ENCODE measurements at regions of chr15 and their contacts with region 1.

Region 1: GRCh38 chr15:75801859-75802593 is 41.2 kb upstream of the UBE2Q2 start:
- DNase-seq: no peak
- H3K4me3 ChIP-seq: peak overlapping the region; percentile 50
- CTCF ChIP-seq: peak; percentile 87

Region 2: GRCh38 chr15:75508840-75509532 is 293.0 kb before region 1 on chr15:
- CTCF ChIA-PET with region 1: interaction called, 18 read pairs
- POLR2A ChIA-PET with region 1: no interaction called
- DNase-seq: no peak
- H3K4me3 ChIP-seq: no peak overlapping the region
- CTCF ChIP-seq: peak; percentile 54

Region 3: DNA sequence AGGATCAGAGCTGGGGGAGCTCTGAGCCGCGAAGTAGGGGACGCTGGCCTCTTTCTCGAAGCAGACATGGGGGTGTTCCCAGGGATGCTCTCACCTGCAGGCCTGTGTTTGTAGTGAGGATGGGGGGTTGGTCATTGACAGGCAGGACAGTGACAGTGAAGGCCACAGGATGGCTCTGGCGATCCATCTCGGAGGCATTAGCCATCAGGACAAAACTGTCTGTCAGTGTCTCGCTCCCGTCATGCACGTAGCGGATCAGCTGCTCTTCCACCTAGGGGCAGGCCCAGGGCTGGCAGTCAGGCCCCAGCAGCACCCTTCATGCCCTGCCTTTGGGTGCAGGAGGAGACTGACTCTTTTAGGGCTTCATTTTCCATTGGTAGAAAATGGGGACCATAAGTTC is 117.4 kb before region 1 on chr15:
- CTCF ChIA-PET with region 1: interaction called, 116 read pairs
- POLR2A ChIA-PET with region 1: interaction called, 5 read pairs
- DNase-seq: no peak
- H3K4me3 ChIP-seq: no peak overlapping the region
- CTCF ChIP-seq: no peak

Region 4: DNA sequence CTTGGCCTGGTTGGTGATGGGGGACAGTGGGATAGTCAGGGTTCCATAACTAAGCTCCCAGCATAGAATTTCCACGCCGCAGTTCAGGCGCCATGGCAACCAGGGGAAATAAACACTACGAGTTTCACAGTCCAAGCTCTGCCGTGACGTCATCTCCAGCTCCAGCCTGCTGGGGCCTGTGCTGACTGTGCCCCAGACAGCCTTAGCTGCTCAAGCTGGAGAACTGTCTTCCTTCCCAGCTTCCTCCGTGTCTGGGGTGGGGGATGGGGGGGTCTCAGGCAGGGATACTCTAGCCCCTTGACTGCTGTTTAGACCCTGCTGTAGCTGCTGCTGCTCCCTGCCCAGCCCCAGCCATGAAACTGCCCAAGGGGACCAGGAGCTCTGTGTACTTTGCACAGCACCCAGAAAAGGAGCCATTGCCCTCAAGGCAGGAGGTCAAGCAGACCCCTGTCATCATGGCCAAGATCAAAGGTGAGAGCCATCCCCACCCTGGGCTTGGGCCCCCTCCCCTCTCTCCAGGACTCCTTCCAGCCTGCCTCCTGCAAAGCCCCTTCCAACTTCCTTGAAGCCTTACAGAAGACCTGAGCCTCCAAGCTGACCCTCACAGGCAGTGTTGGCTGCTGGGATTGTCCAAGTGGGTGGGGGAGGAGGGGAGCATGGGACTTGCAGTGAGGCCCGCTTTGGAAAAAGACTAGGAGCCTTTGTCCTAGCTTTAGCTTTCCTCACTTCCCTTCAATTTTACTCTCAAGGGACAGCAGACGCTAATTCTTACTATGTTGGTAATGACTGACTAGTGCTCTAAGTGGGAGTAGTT is 78.0 kb before region 1 on chr15:
- CTCF ChIA-PET with region 1: interaction called, 59 read pairs
- POLR2A ChIA-PET with region 1: interaction called, 3 read pairs
- DNase-seq: peak; percentile 76
- H3K4me3 ChIP-seq: no peak overlapping the region
- CTCF ChIP-seq: no peak

Region 5: GRCh38 chr15:75776065-75776423 is 26.0 kb before region 1 on chr15:
- CTCF ChIA-PET with region 1: interaction called, 12 read pairs
- POLR2A ChIA-PET with region 1: no interaction called
- DNase-seq: peak; percentile 28
- H3K4me3 ChIP-seq: no peak overlapping the region
- CTCF ChIP-seq: no peak

Region 6: GRCh38 chr15:75821786-75822345 is 19.8 kb after region 1 on chr15:
- CTCF ChIA-PET with region 1: interaction called, 13 read pairs
- POLR2A ChIA-PET with region 1: no interaction called
- DNase-seq: no peak
- H3K4me3 ChIP-seq: no peak overlapping the region
- CTCF ChIP-seq: no peak

Region 7: DNA sequence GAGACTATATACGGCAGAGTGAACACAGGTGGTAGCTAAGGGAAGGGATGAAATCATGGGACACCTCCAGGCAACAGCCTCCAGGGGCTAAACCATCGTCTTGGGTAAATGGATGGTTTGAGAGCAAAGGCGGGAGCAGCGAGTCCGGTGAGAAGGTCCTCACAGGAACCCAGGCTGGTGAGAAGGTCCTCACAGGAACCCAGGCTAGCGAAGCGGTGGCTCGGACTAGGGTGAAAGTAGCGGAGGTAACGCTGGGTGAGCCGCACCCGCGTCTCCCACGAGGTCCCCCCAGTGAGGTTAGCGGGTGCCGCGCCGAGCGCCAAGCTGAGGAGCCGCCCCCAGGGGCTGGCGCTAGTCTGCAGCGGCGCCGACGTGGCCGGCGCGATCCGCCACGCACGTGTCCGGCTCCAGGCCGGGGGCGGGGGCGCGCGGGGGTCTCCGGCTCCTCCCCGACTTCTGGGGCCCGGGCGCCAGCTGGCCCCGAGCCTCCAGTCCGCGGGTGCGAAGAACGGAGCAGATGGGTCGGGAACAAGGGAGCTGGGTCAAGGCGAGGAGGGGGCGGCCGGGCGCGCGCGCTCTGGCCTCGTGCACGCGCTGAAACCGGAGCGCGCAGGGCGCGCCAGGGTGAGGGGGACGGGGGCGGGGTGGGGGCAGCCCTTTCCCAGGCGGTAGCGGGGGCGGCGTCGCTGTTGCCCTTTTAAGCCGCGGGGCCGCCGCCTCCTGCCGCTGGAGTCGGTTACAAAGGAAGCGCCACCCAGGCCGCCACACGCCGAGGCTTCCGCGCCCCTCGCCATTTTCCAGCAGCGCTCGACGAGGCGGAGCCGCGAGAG is 40.9 kb after region 1 on chr15 and contains the start of gene UBE2Q2:
- CTCF ChIA-PET with region 1: interaction called, 15 read pairs
- POLR2A ChIA-PET with region 1: no interaction called
- DNase-seq: no peak
- H3K4me3 ChIP-seq: peak within 1 kb of the TSS; percentile 92
- CTCF ChIP-seq: no peak

Measured in AG04449 (cell line).